ENCODE measurements at regions of chr1 and their contacts with region 1.

Region 1: DNA sequence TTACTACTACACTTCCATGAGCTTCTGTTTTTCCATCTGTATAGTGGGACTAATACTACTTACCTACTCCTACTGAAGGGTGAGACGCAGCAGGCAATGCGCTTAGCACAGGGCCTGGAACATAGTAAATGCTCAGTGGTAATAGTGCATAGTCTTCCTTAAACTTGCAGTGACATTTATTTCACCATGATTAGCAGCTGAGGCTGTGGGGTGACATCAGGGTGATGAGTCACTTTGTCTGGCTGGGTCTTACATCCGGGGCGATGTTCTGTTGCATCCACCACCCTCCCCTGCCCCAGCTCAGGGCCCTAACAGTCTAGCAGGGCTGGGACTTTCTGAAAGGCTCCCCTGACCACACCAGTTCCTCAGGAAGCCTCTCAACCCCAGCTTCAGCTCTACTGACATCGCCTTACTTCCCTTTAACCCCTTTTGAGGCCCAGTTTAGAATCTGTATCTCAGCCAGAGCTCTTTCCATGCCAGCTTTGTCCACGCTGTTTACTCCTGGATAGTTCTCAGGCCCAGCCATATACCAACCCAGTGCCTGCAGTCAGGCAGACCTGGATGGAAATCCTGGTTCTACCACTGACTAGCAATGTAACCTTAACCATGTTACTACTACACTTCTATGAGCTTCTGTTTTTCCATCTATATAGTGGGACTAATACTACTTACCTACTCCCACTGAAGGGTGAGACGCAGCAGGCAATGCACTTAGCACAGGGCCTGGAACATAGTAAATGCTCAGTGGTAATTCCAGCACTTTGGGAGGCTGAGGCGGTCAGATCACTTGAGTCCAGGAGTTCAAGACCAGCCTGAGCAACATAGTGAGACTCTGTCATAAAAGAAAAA is 66.3 kb downstream of the CD58 start:
- DNase-seq: peak; percentile 85
- H3K4me3 Mint-ChIP-seq: peak overlapping the region; percentile 47
- H3K27ac Mint-ChIP-seq: peak overlapping the region; percentile 98
- H3K4me1 Mint-ChIP-seq: peaks cover 74% of the 10 kb centered on the region
- H3K27me3 Mint-ChIP-seq: no peaks in the 10 kb centered on the region

Region 2: DNA sequence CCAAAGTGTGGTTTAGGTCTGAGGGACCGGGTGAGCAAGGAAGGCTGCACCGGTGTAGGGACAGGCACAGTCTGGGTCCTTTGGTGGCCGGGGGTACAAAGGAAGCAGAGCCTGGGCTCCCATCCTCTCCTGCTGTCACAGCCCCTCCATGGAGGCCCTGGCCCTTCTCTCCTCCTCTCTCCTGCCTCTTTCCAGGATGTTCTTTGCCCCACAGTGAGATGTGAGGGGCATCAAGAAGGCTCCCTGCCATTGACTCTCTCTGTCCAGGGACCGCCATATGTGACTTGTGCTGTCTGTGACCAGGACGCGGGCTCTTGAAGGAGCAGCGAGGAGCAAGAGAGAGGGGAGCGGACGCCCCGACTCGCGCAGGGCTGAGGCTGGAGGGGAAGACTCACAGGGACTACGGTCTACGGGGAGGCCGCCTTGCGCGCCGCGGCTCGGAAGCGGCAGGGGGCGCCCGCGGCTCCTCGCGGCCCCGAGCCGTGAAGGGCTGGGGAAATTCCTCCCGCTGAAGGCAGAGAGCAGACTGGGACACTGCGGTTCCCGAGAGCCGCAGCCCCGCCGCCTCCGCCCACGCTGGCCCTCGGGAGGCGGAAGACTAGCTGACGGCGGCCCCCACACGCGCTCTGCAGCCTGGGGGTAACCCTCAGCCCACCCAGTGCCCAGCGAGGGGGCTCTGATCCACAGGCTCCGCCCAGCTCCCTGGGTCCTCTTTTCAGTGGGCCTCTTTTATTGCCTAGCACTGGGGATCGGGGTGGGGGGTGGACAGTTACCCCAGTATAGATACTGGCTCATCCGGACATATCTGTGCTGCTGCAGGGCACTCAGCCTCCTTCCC is 352.6 kb before region 1 on chr1:
- intact Hi-C with region 1: loop called (anchors 1 kb)
- DNase-seq: peak; percentile 68
- H3K4me3 Mint-ChIP-seq: peak overlapping the region; percentile 20
- H3K27ac Mint-ChIP-seq: peak overlapping the region; percentile 50
- H3K4me1 Mint-ChIP-seq: peaks cover 11% of the 10 kb centered on the region
- H3K27me3 Mint-ChIP-seq: peaks cover 32% of the 10 kb centered on the region

Region 3: GRCh38 chr1:116418091-116418830 is 86.3 kb before region 1 on chr1:
- intact Hi-C with region 1: loop called (anchors 1 kb)
- DNase-seq: peak; percentile 82
- H3K4me3 Mint-ChIP-seq: peak overlapping the region; percentile 88
- H3K27ac Mint-ChIP-seq: peak overlapping the region; percentile 82
- H3K4me1 Mint-ChIP-seq: peaks cover 38% of the 10 kb centered on the region
- H3K27me3 Mint-ChIP-seq: peaks cover 10% of the 10 kb centered on the region

Region 4: GRCh38 chr1:116556289-116557006 is 51.9 kb after region 1 on chr1:
- intact Hi-C with region 1: loop called (anchors 1 kb)
- DNase-seq: peak; percentile 63
- H3K4me3 Mint-ChIP-seq: peak overlapping the region; percentile 2
- H3K27ac Mint-ChIP-seq: peak overlapping the region; percentile 93
- H3K4me1 Mint-ChIP-seq: peaks cover 75% of the 10 kb centered on the region
- H3K27me3 Mint-ChIP-seq: no peaks in the 10 kb centered on the region

Region 5: DNA sequence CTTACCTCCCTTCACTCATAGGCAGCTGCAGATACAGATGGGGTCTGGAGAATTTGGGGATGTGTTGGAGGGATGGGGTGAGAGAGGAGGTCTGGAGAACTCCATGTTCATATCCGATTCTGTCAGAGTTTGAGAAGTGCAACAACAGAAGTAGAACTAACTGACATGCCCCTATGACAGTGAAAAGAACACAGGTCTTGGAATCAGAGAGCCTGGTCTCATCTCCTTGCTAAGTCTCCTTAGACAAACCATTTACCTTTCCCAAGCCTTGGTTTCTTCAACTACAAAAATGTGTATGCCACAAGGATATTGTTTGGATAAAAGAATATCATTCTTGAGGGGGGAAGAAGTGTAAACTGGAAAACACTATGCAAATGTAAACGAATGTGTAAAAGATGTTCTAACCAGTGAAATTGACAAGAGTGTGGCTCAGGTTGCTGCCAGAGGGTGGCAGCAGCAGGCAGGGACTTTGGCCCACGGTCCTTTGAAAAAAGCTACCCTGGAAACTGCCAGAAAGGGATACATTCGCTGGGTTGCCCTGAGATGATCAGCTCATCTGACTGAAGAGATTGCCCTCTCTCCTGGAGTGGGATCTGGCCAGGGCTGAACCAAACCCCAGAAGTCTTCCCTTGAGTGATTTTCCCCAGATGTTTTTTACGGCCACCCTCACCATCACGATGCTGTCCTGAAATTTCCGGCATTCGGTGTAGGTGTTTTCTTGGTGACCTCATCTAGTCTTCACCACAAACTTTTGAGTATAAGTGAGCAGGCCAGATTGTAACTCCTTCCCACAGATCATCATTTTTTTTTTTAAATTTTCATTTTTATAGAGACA is 232.7 kb after region 1 on chr1:
- intact Hi-C with region 1: loop called (anchors 5 kb)
- DNase-seq: peak; percentile 70
- H3K4me3 Mint-ChIP-seq: peak overlapping the region; percentile 61
- H3K27ac Mint-ChIP-seq: peak overlapping the region; percentile 100
- H3K4me1 Mint-ChIP-seq: peaks cover 69% of the 10 kb centered on the region
- H3K27me3 Mint-ChIP-seq: no peaks in the 10 kb centered on the region

Region 6: GRCh38 chr1:116826818-116827606 is 322.5 kb after region 1 on chr1:
- intact Hi-C with region 1: loop called (anchors 1 kb)
- DNase-seq: peak; percentile 73
- H3K4me3 Mint-ChIP-seq: peak overlapping the region; percentile 71
- H3K27ac Mint-ChIP-seq: peak overlapping the region; percentile 97
- H3K4me1 Mint-ChIP-seq: peaks cover 64% of the 10 kb centered on the region
- H3K27me3 Mint-ChIP-seq: no peaks in the 10 kb centered on the region

Region 7: GRCh38 chr1:117664314-117664713 is 1159.8 kb after region 1 on chr1:
- intact Hi-C with region 1: loop called (anchors 5 kb)
- DNase-seq: peak; percentile 67
- H3K4me3 Mint-ChIP-seq: no peak overlapping the region
- H3K27ac Mint-ChIP-seq: peak overlapping the region; percentile 83
- H3K4me1 Mint-ChIP-seq: peaks cover 67% of the 10 kb centered on the region
- H3K27me3 Mint-ChIP-seq: no peaks in the 10 kb centered on the region

Measured in activated T-helper 2 cell treated with anti-CD3 and anti-CD28 coated beads, Interferon-gamma antibody, Interleukin-2, Interleukin-4, amounts not matched to agents 10 μg/mL and 5 μg/mL and 100 μg/mL, durations not matched to agents 14 hours and 24 hours and 36 hours (primary cell).